Activated T-helper 2 cell treated with anti-CD3 and anti-CD28 coated beads, Interferon-gamma antibody, Interleukin-2, Interleukin-4, amounts not matched to agents 10 μg/mL and 5 μg/mL and 100 μg/mL, durations not matched to agents 14 hours and 24 hours and 36 hours (primary cell): ENCODE measurements at regions of chr5 and their contacts with region 1.

Region 1: DNA sequence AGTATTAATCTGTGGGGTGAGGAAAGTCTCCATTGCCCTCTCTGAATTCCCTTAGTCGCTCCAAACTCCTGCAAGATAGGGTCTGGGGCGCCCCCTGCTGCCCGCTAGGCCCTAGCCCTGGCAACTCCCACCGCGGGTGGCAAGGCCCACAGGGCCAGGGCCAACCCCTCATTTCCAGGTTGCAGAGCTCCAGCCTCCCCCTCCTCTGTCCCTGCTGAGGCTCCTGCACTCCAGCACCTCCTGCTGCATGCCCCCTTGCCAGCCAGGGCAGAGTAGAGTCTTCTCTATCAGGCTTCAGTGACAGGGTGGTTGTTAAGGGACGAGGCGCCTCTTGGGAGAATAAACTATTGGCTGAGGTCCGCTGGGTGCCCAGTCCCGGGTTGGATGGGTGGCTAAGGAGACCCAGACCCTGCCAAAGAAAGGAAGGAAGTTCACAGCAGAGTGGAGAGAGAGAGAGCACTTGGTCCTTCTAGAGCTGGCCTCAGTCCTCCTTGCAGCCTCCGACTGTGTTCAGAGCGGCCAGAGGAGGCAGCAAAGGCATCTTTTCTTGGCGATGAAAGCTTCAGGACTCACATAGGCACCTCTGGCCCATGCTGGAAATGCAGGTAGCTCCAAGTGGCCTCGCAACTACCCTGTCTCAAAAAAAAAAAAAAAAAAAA is 45.6 kb downstream of the SAR1B start:
- DNase-seq: peak; percentile 74
- H3K4me3 Mint-ChIP-seq: no peak overlapping the region
- H3K27ac Mint-ChIP-seq: peak overlapping the region; percentile 25
- H3K4me1 Mint-ChIP-seq: peaks cover 15% of the 10 kb centered on the region
- H3K27me3 Mint-ChIP-seq: no peaks in the 10 kb centered on the region

Region 2: DNA sequence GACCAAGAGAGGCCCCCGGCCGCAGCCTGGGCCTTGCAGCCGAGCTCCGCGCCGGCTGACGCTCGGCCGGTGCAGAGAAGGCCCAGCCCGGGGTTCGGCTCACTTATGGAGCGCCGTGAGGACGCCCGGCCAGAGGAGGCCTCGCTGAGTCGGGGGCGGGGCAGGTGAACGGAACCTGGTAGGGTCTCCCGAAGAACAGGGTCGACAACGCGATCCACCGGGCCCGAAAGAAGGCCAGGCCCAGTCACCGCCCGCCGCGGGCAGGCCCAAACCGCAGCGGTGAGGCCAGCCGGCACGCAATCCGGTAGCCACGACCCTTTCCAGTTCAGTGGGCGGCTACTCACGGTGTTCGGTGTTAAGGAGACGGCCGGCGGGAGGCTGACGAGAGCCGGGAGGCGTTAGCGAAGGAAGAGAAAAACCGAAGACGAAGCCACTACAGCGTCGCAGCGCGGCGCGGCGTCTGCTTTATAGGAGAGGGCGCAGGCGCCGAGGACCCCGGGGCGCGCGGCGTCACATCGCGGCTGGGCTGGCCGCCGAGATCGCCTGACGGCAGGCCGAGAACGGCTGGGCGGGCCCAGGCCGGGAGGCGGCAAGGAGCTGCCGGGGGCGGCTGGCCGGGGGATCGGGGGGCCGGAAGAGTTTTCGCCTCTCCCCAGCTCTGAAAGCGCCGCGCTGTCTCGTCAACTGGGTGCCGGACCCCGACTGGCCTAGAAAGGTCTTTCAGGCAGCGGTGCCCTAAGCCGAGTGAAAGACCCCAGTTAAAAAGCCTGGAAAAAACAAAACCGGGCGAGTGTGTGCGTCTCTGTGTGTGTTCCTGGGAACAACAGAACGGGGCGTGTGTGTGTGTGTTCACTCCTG is 410.3 kb before region 1 on chr5 and contains the start of gene SKP1:
- intact Hi-C with region 1: loop called (anchors 5 kb)
- DNase-seq: peak; percentile 85
- H3K4me3 Mint-ChIP-seq: peak within 1 kb of the TSS; percentile 97
- H3K27ac Mint-ChIP-seq: peak within 1 kb of the TSS; percentile 98
- H3K4me1 Mint-ChIP-seq: peaks cover 23% of the 10 kb centered on the region
- H3K27me3 Mint-ChIP-seq: peaks cover 8% of the 10 kb centered on the region
- total RNA-seq, gene SKP1: 254 and 257 TPM in 2 replicates

Region 3: GRCh38 chr5:134296213-134296612 is 290.8 kb before region 1 on chr5:
- intact Hi-C with region 1: loop called (anchors 1 kb)
- DNase-seq: no peak
- H3K4me3 Mint-ChIP-seq: no peak overlapping the region
- H3K27ac Mint-ChIP-seq: no peak overlapping the region
- H3K4me1 Mint-ChIP-seq: no peaks in the 10 kb centered on the region
- H3K27me3 Mint-ChIP-seq: peaks cover 13% of the 10 kb centered on the region

Region 4: DNA sequence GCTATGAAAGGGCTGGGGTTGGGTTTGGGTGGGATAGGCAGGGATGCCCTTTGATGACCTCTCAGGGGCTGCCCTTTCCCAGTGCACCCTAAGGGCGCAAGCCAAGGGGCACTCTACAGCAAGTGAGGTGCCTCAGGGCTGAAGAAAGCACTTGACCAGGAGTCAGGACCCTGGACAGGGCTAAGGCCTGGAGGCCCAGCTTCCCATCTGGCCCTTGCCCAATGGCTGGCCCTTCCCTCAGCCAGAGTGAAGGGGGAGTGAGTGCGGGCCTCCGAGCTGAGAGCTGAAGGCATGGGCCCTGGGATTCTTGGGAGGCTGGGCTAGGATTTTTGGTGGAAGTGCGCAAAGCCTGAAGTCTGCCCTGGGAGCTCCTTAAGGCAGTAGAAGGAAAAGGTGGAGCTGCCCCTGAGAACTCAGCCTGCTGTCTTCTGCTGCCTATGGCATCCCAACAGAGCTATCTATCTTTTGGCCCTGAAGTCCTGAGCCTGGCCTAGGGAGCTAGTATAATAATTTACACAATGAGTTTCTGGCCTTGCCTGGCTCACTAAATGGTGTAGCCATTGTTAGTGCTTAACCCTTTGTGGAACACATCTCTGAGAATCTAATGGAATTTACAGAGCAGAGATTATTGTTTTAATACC is 45.1 kb before region 1 on chr5:
- intact Hi-C with region 1: no loop called
- DNase-seq: no peak
- H3K4me3 Mint-ChIP-seq: no peak overlapping the region
- H3K27ac Mint-ChIP-seq: no peak overlapping the region
- H3K4me1 Mint-ChIP-seq: peaks cover 33% of the 10 kb centered on the region
- H3K27me3 Mint-ChIP-seq: no peaks in the 10 kb centered on the region